ENCODE measurements at regions of chr15 and their contacts with region 1.

Region 1: DNA sequence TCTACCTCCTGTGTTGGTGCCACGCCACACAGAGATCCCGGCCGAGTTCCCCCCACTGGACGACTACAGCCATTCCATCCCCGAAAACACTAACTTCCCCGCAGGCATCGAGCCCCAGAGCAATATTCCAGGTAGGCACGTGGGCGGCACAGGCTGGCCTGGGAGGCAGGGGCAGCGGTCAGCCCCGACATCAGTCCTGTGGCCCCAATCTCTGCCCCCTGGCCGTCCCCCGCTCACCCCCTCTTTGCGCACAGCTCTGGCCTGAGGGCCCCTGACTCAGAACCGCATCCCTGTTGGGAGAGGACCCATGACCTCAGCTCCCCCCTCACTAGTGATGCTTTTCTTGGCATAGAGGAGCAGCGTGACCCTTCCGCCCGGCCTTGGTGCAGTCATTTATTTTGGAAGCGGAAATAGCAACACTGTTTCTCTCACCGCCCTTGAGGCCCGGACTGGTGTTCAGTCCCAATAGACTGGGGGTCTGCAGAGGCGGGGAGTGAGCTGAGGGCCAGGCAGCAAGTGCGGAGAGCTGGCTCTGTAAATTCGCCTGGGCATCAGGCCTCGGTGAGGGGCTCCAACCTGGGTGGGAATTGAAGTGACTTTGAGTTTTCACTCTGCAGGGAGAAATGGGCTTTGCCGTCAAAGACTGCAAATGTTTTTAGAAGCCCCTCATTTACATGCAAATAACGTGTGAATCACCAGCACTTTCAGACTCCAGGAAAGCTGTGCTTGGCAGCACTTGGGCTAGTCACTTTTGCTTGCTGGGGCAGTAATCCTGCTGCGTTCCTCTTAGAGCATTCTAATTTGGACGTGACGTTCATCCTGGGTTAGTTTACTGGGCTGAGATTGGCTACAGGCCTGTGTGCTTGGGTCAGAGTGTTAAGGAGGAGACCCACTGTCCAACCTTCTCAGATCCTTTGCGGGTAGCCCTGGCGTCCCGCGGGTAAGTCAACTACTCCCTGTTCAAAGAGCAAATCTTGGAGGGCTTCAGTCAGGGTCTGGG is 88.9 kb downstream of the AAGAB start:
- DNase-seq: peak in 1 of 2 donors; percentile 43
- ATAC-seq: no peak
- H3K4me3 ChIP-seq: no peak overlapping the region
- H3K27ac ChIP-seq: peak overlapping the region; percentile 85 to 99 (median 95)
- H3K4me1 ChIP-seq: peaks cover 89 to 91% of the 10 kb centered on the region in 2 donors
- H3K27me3 ChIP-seq: no peaks in the 10 kb centered on the region
- CTCF ChIP-seq: no peak
- POLR2A ChIP-seq: no peak

Region 2: DNA sequence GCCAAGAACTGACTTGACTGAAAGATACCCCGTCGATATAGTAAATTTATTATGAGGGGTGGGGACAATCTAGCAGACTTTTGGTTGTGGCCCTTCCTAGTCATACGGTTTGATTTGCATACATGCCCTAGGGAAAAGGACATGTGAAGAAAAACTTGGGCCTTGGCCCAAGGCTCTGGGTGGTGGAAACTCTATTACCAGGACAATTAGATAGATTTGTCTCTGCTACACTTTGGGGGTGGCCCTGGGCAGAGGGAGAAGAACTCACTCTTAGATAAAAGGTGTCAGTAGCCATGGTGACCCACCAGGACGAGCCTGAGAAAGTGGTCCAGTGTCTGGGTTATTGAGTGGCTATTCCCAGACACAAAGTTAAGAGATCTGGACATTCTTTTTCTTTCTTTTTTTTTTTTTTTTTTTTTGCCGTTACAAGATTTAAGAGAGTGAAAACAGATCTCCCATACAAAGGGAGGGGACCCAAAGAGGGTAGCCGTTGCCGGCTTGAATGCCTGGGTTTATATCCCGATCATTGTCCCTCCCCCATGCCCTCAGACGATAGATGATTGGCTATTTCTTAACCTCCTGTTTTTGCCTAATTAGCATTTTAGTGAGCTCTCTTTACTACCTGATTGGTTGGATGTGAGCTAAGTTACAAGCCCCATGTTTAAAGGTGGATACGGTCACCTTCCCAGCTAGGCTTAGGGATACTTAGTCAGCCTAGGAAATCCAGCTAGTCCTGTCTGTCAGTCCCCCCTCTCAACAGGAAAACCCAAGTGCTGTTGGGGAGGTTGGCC is 196.6 kb before region 1 on chr15:
- in situ Hi-C with region 1: no loop called
- intact Hi-C with region 1: no loop called
- DNase-seq: no peak
- ATAC-seq: no peak
- H3K4me3 ChIP-seq: no peak overlapping the region
- H3K27ac ChIP-seq: no peak overlapping the region
- H3K4me1 ChIP-seq: no peaks in the 10 kb centered on the region
- H3K27me3 ChIP-seq: no peaks in the 10 kb centered on the region
- CTCF ChIP-seq: no peak
- POLR2A ChIP-seq: no peak

Region 3: DNA sequence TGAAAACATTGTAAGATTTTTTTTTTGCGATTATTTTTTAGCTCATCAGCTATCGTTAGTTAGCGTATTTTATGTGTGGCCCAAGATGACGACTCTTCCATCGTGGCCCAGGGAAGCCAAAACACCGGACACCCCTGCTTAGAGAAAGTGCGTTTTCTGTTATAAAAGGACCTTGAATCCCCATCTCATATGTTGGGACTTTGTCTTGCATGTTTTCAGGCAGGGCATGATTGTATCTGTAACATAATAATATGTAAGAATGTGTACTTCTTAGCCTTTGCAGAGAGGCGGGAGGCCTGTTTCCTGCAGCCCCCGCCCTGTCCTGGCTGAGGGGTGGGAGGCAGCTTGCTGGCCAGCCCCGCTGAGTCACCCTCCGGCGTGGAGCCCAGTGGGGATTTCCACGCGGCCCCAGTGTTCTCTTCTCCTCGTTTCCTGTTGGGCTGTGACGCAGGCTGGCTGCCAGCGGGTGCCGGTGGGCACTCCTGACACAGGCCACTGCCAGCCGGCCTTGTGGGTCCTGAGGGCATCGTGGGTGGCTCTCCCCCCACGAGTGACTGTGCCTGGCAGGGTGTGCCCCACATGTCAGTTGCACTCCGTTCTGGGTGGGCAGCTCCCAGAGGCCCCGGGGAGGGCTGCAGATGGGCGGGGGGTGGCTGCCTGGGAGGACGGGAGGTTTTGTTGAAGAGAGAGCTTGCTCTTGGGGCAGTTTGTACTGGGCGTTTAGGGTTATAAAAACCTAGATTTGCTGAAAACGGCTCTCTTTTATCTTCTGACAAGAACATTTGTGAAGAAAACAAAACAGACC is 44.5 kb before region 1 on chr15:
- in situ Hi-C with region 1: no loop called
- intact Hi-C with region 1: loop called (anchors 1 kb)
- DNase-seq: peak; percentile 79 to 85
- ATAC-seq: peak; percentile 15 to 20
- H3K4me3 ChIP-seq: peak overlapping the region; percentile 7 to 26 (median 24)
- H3K27ac ChIP-seq: peak overlapping the region; percentile 92 to 98 (median 94)
- H3K4me1 ChIP-seq: peaks cover 92% of the 10 kb centered on the region in 2 donors
- H3K27me3 ChIP-seq: no peaks in the 10 kb centered on the region
- CTCF ChIP-seq: no peak
- POLR2A ChIP-seq: peak; percentile 9 to 47

Region 4: GRCh38 chr15:67196672-67197363 is 31.3 kb after region 1 on chr15:
- in situ Hi-C with region 1: no loop called
- intact Hi-C with region 1: loop called (anchors 5 kb)
- DNase-seq: no peak
- ATAC-seq: no peak
- H3K4me3 ChIP-seq: no peak overlapping the region
- H3K27ac ChIP-seq: peak overlapping the region; percentile 91 to 99 (median 96)
- H3K4me1 ChIP-seq: peaks cover 79 to 85% of the 10 kb centered on the region in 2 donors
- H3K27me3 ChIP-seq: no peaks in the 10 kb centered on the region
- CTCF ChIP-seq: no peak
- POLR2A ChIP-seq: no peak

Measured in gastrocnemius medialis (tissue), 4 donors.